WTC11 (cell line): ENCODE measurements at regions of chr19 and their contacts with region 1.

Region 1: GRCh38 chr19:4267101-4267900 is 11.8 kb upstream of the SHD start:
- DNase-seq: peak; percentile 88
- ATAC-seq: peak; percentile 93
- H3K4me3 Mint-ChIP-seq: no peak overlapping the region
- H3K27ac Mint-ChIP-seq: 0 out of 2 replicates have a peak overlapping the region, but pooled peaks have one; percentile 5
- H3K4me1 Mint-ChIP-seq: no peaks in the 10 kb centered on the region; the same call in 1 of the 2 replicates
- H3K27me3 Mint-ChIP-seq: no peaks in the 10 kb centered on the region
- CTCF ChIP-seq: peak; percentile 86

Region 2: GRCh38 chr19:3665681-3666544 is 601.4 kb before region 1 on chr19:
- CTCF ChIA-PET with region 1: no interaction called
- POLR2A ChIA-PET with region 1: no interaction called
- DNase-seq: peak; percentile 81
- ATAC-seq: peak; percentile 74
- H3K4me3 Mint-ChIP-seq: no peak overlapping the region
- H3K27ac Mint-ChIP-seq: peak overlapping the region; percentile 76
- H3K4me1 Mint-ChIP-seq: no peaks in the 10 kb centered on the region
- H3K27me3 Mint-ChIP-seq: no peaks in the 10 kb centered on the region
- CTCF ChIP-seq: peak; percentile 98

Region 3: GRCh38 chr19:4246767-4247593 is 20.3 kb before region 1 on chr19 and contains the start of gene YJU2:
- CTCF ChIA-PET with region 1: interaction called, 23 read pairs
- POLR2A ChIA-PET with region 1: no interaction called
- DNase-seq: peak; percentile 99
- ATAC-seq: peak; percentile 98
- H3K4me3 Mint-ChIP-seq: peak within 1 kb of the TSS; percentile 94
- H3K27ac Mint-ChIP-seq: peak within 1 kb of the TSS; percentile 100
- H3K4me1 Mint-ChIP-seq: 0 out of 2 replicates have a peak, but pooled peaks cover 3% of the 10 kb centered on the region
- H3K27me3 Mint-ChIP-seq: peaks cover 11% of the 10 kb centered on the region
- CTCF ChIP-seq: no peak; the same call in 1 of the 2 replicates
- total RNA-seq, gene YJU2: 24.3 to 26.5 TPM (median 25.2 TPM) in 3 replicates

Region 4: GRCh38 chr19:4304530-4305252 is 37.4 kb after region 1 on chr19 and contains the start of gene FSD1:
- CTCF ChIA-PET with region 1: interaction called, 54 read pairs
- POLR2A ChIA-PET with region 1: no interaction called
- DNase-seq: peak; percentile 87
- ATAC-seq: peak; percentile 93
- H3K4me3 Mint-ChIP-seq: peak within 1 kb of the TSS; percentile 67
- H3K27ac Mint-ChIP-seq: no peak within 1 kb of the TSS
- H3K4me1 Mint-ChIP-seq: peaks cover 17% of the 10 kb centered on the region
- H3K27me3 Mint-ChIP-seq: peaks cover 3% of the 10 kb centered on the region
- CTCF ChIP-seq: no peak
- total RNA-seq, gene FSD1: 61.3 to 69.2 TPM (median 65.7 TPM) in 3 replicates

Region 5: GRCh38 chr19:4352701-4353121 is 85.4 kb after region 1 on chr19:
- CTCF ChIA-PET with region 1: interaction called, 187 read pairs
- POLR2A ChIA-PET with region 1: interaction called, 5 read pairs
- DNase-seq: peak; percentile 78
- ATAC-seq: peak; percentile 84
- H3K4me3 Mint-ChIP-seq: no peak overlapping the region
- H3K27ac Mint-ChIP-seq: no peak overlapping the region
- H3K4me1 Mint-ChIP-seq: no peaks in the 10 kb centered on the region
- H3K27me3 Mint-ChIP-seq: no peaks in the 10 kb centered on the region
- CTCF ChIP-seq: peak; percentile 77

Region 6: DNA sequence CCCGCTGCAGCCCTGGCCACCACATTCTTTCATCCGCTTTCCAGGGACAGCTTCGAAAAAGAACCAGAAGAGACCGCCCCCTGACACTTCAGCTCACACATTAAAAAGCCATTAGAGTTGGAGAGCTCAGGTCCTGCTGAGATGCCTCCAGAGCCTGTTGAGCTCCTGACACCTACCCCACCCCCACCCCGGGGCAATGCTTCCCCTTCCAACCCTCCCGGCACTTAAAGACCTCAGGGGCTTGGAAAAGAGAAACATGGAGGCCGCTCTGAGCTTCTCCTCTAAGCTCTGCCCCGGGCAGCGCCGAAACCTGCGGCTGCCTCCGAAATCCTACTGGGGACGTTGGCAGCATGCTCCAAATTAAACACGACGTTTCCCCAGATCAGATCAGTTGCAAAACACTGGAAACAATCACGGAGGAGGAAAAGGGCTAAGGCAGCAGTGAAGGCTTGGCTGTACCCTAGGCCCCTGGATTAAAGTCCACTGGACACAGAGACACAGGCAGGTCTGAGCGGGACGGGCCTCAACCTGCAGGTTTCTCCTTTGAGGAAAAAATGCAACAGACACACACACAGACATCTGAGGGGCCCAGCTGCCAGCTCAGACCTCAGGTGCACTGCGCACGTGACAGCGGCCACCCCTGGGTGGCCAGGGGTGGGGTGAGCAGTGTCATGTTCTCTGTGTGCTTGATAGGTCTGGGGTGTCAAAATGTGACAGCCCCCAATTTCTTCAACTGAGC is 123.4 kb after region 1 on chr19:
- CTCF ChIA-PET with region 1: interaction called, 14 read pairs
- POLR2A ChIA-PET with region 1: no interaction called
- DNase-seq: peak; percentile 56
- ATAC-seq: peak; percentile 83
- H3K4me3 Mint-ChIP-seq: peak overlapping the region; percentile 66
- H3K27ac Mint-ChIP-seq: peak overlapping the region; percentile 96
- H3K4me1 Mint-ChIP-seq: peaks cover 46% of the 10 kb centered on the region
- H3K27me3 Mint-ChIP-seq: no peaks in the 10 kb centered on the region; the same call in 1 of the 2 replicates
- CTCF ChIP-seq: no peak

Region 7: DNA sequence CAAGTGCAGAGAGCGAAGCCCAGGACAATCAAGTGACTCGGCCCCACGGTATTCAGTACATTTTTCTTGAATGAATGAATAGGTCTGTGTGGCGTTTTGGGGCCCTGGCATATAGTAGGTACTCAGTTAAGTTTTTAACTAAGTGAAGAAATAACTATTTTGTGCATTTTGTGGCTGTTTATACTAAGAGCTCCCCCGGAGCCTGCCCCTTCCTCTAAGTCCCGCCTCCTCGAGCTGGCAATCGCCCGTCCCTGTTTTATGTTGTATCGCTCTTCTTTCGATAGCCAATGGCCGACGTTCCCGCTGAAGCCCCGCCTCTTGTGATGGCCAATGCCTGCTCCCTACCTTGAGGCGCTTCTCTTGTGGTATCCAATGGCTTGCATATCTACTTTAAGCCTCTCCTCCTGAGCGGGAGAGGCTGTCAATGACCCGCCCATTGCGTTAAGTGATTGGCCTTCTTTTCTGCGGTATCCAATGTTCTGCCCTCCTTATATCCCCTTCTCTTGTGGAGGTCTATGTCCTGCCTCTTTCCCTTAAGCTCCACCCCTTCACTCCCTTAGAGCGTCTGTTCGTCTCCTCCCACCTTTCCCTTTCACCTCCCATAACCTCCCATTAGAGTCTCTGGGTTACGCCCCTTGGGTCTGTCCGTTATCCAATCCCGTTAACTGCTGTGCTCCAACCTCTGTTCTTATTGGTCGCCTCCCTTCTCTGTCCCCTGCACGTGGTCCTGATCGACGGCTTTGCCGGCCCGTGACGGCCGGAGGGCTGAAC is 204.3 kb after region 1 on chr19:
- CTCF ChIA-PET with region 1: interaction called, 10 read pairs
- POLR2A ChIA-PET with region 1: no interaction called
- DNase-seq: peak; percentile 97
- ATAC-seq: peak; percentile 88
- H3K4me3 Mint-ChIP-seq: no peak overlapping the region
- H3K27ac Mint-ChIP-seq: no peak overlapping the region
- H3K4me1 Mint-ChIP-seq: peaks cover 10% of the 10 kb centered on the region
- H3K27me3 Mint-ChIP-seq: no peaks in the 10 kb centered on the region
- CTCF ChIP-seq: no peak